CD4-positive, alpha-beta memory T cell (primary cell): ENCODE measurements at regions of chr20 and their contacts with region 1.

Region 1: DNA sequence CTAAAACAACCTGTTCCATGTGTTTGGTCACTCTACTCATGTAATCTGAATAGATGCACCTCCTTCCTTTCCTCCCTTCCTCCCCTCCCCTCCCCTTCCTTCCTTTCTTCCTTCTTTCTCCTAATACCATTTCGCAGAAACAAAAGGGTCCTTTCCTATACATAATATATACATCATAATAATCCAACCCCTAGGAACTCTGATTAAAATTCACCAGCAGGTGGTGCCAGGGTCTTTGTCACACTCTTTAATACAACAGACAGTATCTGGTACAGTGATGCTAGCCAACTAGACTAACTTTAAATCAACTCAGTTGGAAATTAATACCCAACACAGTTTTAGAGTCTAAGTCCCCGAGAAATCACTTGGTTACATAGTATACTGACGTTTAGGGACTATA is 181.2 kb upstream of the SHLD1 start:
- DNase-seq: peak; percentile 51 to 65 (median 61)
- H3K4me3 ChIP-seq: no peak overlapping the region
- H3K4me3 Mint-ChIP-seq: no peak overlapping the region
- H3K27ac ChIP-seq: no peak overlapping the region
- H3K27ac Mint-ChIP-seq: peak overlapping the region; percentile 8 to 89 (median 65)
- H3K4me1 ChIP-seq: peaks cover 19% of the 10 kb centered on the region
- H3K4me1 Mint-ChIP-seq: peaks cover 17 to 26% (median 21%) of the 10 kb centered on the region in 4 donors
- H3K27me3 ChIP-seq: no peaks in the 10 kb centered on the region
- H3K27me3 Mint-ChIP-seq: no peaks in the 10 kb centered on the region

Region 2: DNA sequence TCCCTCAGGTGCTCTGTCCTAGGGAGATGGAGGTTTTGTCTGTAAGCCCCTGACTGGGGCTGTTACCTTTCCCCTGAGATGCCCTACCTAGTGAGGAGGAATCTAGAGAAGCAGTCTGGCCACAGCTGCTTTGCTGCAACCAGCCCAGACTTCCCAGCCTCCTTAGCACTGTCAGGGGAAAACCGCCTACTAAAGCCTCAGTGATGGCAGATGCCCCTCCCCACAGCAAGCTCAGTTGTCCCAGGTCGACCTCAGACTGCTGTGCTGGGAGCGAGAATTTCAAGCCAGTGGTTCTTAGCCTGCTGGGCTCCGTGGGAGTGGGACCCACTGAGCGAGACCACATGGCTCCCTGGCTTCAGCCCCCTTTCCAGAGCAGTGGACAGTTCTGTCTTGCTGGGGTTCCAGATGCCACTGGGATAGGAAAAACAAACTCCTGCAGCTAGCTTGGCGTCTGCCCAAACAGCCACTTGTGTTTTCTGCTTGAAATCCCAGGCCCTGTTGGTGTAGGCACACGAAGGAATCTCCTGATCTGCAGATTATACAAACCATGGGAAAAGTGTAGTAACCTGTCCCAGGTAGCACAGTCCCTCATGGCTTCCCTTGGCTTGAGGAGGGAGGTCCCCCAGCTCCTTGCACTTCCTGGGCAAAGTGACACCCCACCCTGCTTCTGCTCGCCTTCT is 105.9 kb before region 1 on chr20:
- CTCF ChIA-PET with region 1: no interaction called
- POLR2A ChIA-PET with region 1: no interaction called
- intact Hi-C with region 1: no loop called
- DNase-seq: no peak
- H3K4me3 ChIP-seq: no peak overlapping the region
- H3K4me3 Mint-ChIP-seq: no peak overlapping the region
- H3K27ac ChIP-seq: no peak overlapping the region
- H3K27ac Mint-ChIP-seq: no peak overlapping the region
- H3K4me1 ChIP-seq: no peaks in the 10 kb centered on the region
- H3K4me1 Mint-ChIP-seq: no peaks in the 10 kb centered on the region
- H3K27me3 ChIP-seq: no peaks in the 10 kb centered on the region
- H3K27me3 Mint-ChIP-seq: peaks cover 31 to 37% of the 10 kb centered on the region in 2 donors

Region 3: DNA sequence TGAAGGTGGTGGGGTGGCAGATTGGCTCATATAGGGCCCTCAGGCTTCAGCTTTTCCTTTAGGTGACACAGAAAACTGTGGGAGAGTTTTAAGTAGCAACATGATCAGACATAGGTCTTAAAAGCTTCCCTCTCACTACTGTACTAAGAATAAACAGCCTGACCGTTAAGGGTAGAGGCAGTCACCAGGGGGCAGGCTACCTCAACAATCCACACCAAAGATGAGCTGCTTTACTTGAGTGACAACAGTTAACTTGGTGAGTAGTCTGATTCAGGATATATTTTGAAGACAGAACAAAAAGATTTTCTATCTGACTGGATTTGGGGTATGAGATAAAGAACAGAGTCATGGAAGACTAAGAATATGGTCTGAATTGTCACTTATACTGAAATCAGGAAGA is 11.9 kb before region 1 on chr20:
- CTCF ChIA-PET with region 1: interaction called, 15 read pairs
- POLR2A ChIA-PET with region 1: no interaction called
- intact Hi-C with region 1: no loop called
- DNase-seq: peak; percentile 24 to 47 (median 38)
- H3K4me3 ChIP-seq: no peak overlapping the region
- H3K4me3 Mint-ChIP-seq: no peak overlapping the region
- H3K27ac ChIP-seq: no peak overlapping the region
- H3K27ac Mint-ChIP-seq: peak overlapping the region in 3 of 7 donors; percentile 8 to 87 (median 33)
- H3K4me1 ChIP-seq: no peaks in the 10 kb centered on the region
- H3K4me1 Mint-ChIP-seq: peaks cover 0 to 4% (median 3%) of the 10 kb centered on the region in 4 donors
- H3K27me3 ChIP-seq: no peaks in the 10 kb centered on the region
- H3K27me3 Mint-ChIP-seq: no peaks in the 10 kb centered on the region

Region 4: DNA sequence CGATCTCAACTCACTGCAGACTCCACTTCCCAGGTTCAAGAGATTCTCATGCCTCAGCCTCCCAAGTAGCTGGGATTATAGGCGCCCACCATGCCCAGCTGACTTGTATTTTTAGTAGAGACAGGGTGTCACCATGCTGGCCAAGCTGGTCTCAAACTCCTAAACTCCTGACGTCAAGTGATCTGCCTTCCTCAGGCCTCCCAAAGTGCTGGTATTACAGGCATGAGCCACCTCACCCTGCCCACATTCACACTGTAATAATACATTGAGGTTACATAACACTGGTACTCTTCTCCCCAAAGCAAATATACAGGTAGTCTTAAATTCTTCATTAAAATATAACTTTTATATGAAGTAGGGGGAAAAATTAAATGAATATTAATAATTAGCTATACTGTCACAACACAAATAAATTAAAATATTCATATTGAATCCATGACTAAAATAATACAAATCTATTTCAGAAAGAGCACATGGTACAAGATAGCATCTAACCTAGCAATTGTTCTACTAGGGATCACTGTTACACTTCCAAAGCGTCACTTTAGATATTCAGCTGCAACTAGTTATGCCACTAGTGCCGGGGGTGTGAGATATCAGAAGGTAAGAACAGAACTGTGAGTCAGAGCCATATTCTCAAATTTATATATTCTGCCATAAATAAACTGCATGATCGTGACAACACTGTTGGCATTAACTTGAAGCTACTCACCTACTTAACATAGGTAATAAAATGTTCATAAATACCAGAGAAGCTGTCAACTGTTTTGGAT is 12.1 kb after region 1 on chr20:
- CTCF ChIA-PET with region 1: interaction called, 14 read pairs
- POLR2A ChIA-PET with region 1: no interaction called
- intact Hi-C with region 1: no loop called
- DNase-seq: no peak
- H3K4me3 ChIP-seq: no peak overlapping the region
- H3K4me3 Mint-ChIP-seq: no peak overlapping the region
- H3K27ac ChIP-seq: no peak overlapping the region
- H3K27ac Mint-ChIP-seq: peak overlapping the region in 1 of 7 donors; percentile 30
- H3K4me1 ChIP-seq: no peaks in the 10 kb centered on the region
- H3K4me1 Mint-ChIP-seq: peaks cover 7 to 32% (median 18%) of the 10 kb centered on the region in 4 donors
- H3K27me3 ChIP-seq: no peaks in the 10 kb centered on the region
- H3K27me3 Mint-ChIP-seq: no peaks in the 10 kb centered on the region

Region 5: DNA sequence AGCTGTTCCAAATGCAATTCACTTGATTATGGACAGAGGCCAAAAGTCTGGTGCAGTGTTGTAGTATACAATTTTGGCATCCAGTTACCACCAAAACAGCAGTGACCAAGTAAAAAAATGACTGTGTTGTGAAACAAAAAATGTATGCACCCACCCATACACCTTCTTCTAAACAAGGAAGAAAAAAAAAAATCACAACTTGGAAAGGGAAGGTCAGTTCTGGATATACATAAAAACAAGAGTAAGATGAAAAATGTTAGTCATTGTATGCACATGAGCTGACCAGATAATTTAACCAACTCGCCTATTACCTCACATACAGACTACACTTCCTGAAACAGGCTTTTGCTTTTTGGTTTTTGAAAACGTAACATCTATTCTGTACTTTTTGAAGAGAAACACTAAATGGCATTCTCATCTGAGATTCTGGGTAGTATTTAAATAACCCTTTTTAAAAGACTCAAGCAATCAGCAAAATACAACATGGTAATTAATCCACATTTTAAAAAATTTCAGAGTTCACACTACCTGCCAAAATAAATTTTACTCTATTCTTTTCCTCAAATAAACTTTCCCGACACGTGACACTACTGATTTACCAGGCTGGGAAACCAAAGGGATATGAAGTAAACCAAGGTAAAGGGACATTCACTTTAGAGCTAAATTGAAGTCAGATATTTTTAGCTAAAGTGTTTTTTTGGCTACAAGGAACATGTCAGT is 39.6 kb after region 1 on chr20:
- CTCF ChIA-PET with region 1: interaction called, 10 read pairs
- POLR2A ChIA-PET with region 1: interaction called, 3 read pairs
- intact Hi-C with region 1: no loop called
- DNase-seq: no peak
- H3K4me3 ChIP-seq: peak overlapping the region; percentile 96 to 98
- H3K4me3 Mint-ChIP-seq: peak overlapping the region; percentile 90 to 100 (median 98)
- H3K27ac ChIP-seq: peak overlapping the region; percentile 98
- H3K27ac Mint-ChIP-seq: peak overlapping the region; percentile 99 to 100 (median 99)
- H3K4me1 ChIP-seq: peaks cover 62% of the 10 kb centered on the region
- H3K4me1 Mint-ChIP-seq: peaks cover 36 to 66% (median 49%) of the 10 kb centered on the region in 4 donors
- H3K27me3 ChIP-seq: no peaks in the 10 kb centered on the region
- H3K27me3 Mint-ChIP-seq: peaks cover 0 to 2% of the 10 kb centered on the region in 2 donors

Region 6: DNA sequence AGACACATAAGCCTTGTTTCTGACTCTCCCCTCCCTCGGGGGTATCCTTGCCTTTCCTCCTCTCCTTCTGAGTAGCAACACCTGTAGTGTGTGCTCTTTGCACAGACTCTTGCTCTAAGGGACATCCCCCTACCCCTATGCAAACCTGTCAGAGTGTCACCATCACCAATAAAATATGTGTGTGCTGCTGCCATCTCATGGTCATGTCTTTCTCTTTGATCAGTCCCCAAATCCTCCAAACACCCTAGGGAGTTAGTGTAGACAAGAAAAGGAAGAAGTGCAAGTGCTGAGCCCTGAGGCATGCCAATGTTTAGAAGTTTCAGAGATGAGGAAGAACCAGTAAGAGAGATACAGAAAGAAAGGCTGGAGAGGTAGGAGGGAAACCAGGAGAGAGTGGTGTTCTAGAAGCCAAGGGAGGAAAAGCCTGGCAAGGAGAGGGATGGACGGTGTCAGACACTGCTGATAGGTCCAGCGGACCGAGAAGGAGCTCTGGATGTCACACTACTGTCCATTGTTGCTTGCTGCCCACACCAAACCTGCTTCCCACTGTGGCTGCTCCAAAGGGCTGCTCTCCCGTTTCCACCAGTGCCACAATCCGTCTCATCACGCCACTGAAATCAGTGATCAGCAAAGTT is 364.9 kb after region 1 on chr20:
- CTCF ChIA-PET with region 1: no interaction called
- POLR2A ChIA-PET with region 1: no interaction called
- intact Hi-C with region 1: loop called (anchors 1 kb)
- DNase-seq: peak in 1 of 5 donors; percentile 23
- H3K4me3 ChIP-seq: no peak overlapping the region
- H3K4me3 Mint-ChIP-seq: no peak overlapping the region
- H3K27ac ChIP-seq: no peak overlapping the region
- H3K27ac Mint-ChIP-seq: peak overlapping the region in 1 of 7 donors; percentile 74
- H3K4me1 ChIP-seq: no peaks in the 10 kb centered on the region
- H3K4me1 Mint-ChIP-seq: peaks cover 0 to 3% (median 0%) of the 10 kb centered on the region in 4 donors
- H3K27me3 ChIP-seq: no peaks in the 10 kb centered on the region
- H3K27me3 Mint-ChIP-seq: peaks cover 0 to 2% of the 10 kb centered on the region in 2 donors

Region 7: DNA sequence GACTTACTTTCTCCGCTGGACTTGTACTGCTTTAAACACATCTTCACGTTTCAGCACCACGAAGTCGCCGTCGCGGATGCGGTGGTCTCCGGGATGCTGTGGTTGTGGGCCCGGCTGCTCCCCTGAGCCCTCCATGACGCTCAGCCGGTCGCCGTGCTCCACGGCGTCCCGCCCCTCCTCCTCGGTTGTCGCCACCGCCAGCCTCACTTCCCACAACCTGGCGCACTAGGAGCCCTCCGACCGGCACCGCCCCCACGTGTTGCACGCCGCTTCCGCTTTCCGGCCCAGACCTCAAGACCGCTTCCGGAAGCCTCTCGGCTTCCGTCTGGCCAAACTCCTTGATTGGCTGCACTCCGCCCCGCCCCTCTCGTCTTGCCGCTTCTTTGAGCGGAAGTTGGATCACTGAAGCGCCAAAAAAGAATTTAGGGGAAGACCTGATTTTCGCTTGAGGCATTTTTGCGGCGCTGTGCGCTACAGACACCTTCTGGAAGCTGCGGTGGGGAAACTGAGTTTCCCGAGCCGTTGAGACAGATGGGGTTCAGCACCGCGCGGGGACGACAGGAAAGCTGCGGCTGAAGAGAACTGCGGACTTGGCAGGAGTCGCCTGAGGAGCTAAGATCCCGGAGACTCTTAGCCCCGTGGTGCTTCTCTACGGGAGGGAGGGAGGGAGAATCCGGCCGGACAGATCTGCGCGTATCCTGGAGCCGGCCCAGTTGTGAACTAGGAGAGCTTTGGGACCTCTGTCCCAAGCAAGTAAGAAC is 381.4 kb after region 1 on chr20 and contains the starts of genes MCM8 and TRMT6:
- CTCF ChIA-PET with region 1: no interaction called
- POLR2A ChIA-PET with region 1: no interaction called
- intact Hi-C with region 1: loop called (anchors 1 kb)
- DNase-seq: peak; percentile 94 to 98 (median 95)
- H3K4me3 ChIP-seq: peak within 1 kb of the TSS; percentile 90 to 97
- H3K4me3 Mint-ChIP-seq: peak within 1 kb of the TSS; percentile 92 to 100 (median 98)
- H3K27ac ChIP-seq: peak within 1 kb of the TSS; percentile 73
- H3K27ac Mint-ChIP-seq: peak within 1 kb of the TSS; percentile 95 to 99 (median 99)
- H3K4me1 ChIP-seq: peaks cover 34% of the 10 kb centered on the region
- H3K4me1 Mint-ChIP-seq: peaks cover 28 to 39% (median 34%) of the 10 kb centered on the region in 4 donors
- H3K27me3 ChIP-seq: no peaks in the 10 kb centered on the region
- H3K27me3 Mint-ChIP-seq: peaks cover 1 to 2% of the 10 kb centered on the region in 2 donors
- total RNA-seq, gene MCM8: 10.2 to 11.1 TPM
- total RNA-seq, gene TRMT6: 17.9 to 18.3 TPM

Region 8: DNA sequence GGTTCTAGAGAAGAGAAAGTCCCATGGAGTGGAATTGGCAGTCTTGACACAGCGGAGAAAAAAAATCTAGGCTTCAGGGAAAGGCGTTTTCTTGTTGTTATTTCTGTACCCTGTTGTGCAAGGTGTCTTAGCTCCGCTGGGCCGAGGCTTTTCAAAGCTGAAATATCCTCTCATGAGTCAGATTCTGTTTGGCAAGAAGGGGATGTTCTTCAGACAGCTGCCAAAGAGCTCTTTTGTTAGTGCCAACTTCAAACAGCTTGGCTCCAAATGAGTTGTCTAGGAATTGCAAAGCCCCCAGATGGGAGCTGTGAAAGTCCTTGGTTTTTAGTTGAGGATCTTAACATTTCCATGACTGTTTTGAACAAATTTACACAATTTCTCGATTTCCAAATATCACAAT is 439.2 kb after region 1 on chr20:
- CTCF ChIA-PET with region 1: no interaction called
- POLR2A ChIA-PET with region 1: no interaction called
- intact Hi-C with region 1: loop called (anchors 1 kb)
- DNase-seq: no peak
- H3K4me3 ChIP-seq: no peak overlapping the region
- H3K4me3 Mint-ChIP-seq: peak overlapping the region in 5 of 8 donors; percentile 13 to 99 (median 41)
- H3K27ac ChIP-seq: no peak overlapping the region
- H3K27ac Mint-ChIP-seq: peak overlapping the region in 3 of 7 donors; percentile 37 to 86 (median 72)
- H3K4me1 ChIP-seq: peaks cover 33% of the 10 kb centered on the region
- H3K4me1 Mint-ChIP-seq: peaks cover 28 to 57% (median 36%) of the 10 kb centered on the region in 4 donors
- H3K27me3 ChIP-seq: no peaks in the 10 kb centered on the region
- H3K27me3 Mint-ChIP-seq: no peaks in the 10 kb centered on the region